ENCODE measurements at regions of chrX and their contacts with region 1.

Region 1: GRCh38 chrX:71181910-71182799 is 37.5 kb downstream of the NLGN3 start:
- DNase-seq: peak; percentile 54 to 89 (median 80)
- ATAC-seq: peak; percentile 94 to 95
- H3K4me3 Mint-ChIP-seq: peak overlapping the region; percentile 88 to 98 (median 94)
- H3K27ac Mint-ChIP-seq: peak overlapping the region; percentile 90 to 100 (median 99)
- H3K4me1 Mint-ChIP-seq: peaks cover 0 to 21% (median 14%) of the 10 kb centered on the region in 4 donors
- H3K27me3 Mint-ChIP-seq: no peaks in the 10 kb centered on the region

Region 2: GRCh38 chrX:71103110-71103983 is 78.8 kb before region 1 on chrX:
- POLR2A ChIA-PET with region 1: interaction called, 14 read pairs
- DNase-seq: peak; percentile 28 to 78 (median 50)
- ATAC-seq: peak; percentile 41 to 58
- H3K4me3 Mint-ChIP-seq: peak overlapping the region; percentile 73 to 88 (median 80)
- H3K27ac Mint-ChIP-seq: peak overlapping the region; percentile 90 to 97 (median 94)
- H3K4me1 Mint-ChIP-seq: peaks cover 39 to 90% (median 89%) of the 10 kb centered on the region in 4 donors
- H3K27me3 Mint-ChIP-seq: no peaks in the 10 kb centered on the region

Region 3: DNA sequence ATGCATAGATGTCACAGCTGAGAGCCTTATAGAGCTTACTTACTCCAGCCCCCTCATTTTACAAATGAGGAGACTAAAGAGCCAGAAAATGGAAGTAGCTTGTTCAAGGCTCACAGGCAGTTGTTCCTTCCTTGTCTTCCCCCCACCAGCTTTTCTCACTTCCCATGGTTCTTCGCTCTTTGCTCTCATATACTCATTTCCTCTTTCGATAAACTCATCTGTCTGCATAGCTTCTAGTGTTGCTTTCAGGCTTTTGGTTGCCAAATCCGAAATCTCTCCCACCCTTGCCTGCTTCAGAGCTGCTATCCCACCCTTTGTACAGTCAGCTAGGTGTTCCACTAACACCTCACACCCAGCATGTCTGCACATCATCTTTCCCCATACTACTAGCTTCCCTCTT is 15.9 kb after region 1 on chrX:
- POLR2A ChIA-PET with region 1: interaction called, 37 read pairs
- DNase-seq: peak in 3 of 10 donors; percentile 17 to 29 (median 22)
- ATAC-seq: peak; percentile 49 to 56
- H3K4me3 Mint-ChIP-seq: peak overlapping the region; percentile 78 to 94 (median 90)
- H3K27ac Mint-ChIP-seq: peak overlapping the region; percentile 86 to 98 (median 94)
- H3K4me1 Mint-ChIP-seq: peaks cover 15 to 35% (median 30%) of the 10 kb centered on the region in 4 donors
- H3K27me3 Mint-ChIP-seq: no peaks in the 10 kb centered on the region

Region 4: DNA sequence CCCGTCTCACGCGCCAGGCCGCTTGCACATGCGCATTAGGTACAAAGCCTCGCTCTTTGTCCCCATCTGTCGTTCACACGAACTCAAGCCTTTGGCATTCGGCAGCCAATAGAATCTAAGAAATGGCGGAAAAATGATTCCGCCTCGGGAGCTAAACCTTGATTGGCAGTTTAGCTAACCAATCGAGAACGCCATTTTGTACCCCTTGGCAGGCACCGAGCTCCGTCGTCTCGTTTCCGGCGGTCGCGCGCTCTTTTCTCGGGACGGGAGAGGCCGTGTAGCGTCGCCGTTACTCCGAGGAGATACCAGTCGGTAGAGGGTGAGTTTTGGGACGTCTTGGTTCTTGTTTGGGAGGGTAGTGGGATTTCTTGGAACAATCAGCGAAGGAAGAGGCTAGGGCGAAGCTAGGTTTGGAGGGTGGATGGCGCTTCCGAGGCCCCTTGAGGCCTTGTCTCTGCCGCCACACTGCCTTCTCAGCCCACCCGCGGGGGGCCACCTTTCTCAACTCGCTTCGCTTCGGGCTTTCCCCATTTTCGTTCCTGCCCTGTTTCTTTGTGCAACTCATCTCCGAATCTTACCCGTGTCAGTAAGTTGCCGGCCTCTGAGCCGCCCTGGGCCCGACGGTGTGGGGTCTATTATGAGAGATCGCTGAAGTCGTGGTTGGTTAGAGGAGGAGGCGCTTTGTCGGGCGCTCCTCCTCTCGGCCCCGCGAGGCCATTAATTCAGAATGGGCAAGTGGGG is 101.4 kb after region 1 on chrX and contains the start of gene NONO:
- POLR2A ChIA-PET with region 1: interaction called, 29 read pairs
- DNase-seq: peak; percentile 61 to 96 (median 86)
- ATAC-seq: peak; percentile 88 to 90
- H3K4me3 Mint-ChIP-seq: peak within 1 kb of the TSS; percentile 96 to 100 (median 99)
- H3K27ac Mint-ChIP-seq: peak within 1 kb of the TSS; percentile 99 to 100 (median 100)
- H3K4me1 Mint-ChIP-seq: peaks cover 1 to 32% (median 12%) of the 10 kb centered on the region in 4 donors
- H3K27me3 Mint-ChIP-seq: no peaks in the 10 kb centered on the region
- polyA plus RNA-seq, gene NONO: 177 to 199 (median 193) TPM

Region 5: GRCh38 chrX:71301195-71301924 is 119.2 kb after region 1 on chrX and contains the start of gene ITGB1BP2:
- POLR2A ChIA-PET with region 1: no interaction called
- DNase-seq: no peak
- ATAC-seq: peak in 1 of 2 donors; percentile 26
- H3K4me3 Mint-ChIP-seq: no peak within 1 kb of the TSS
- H3K27ac Mint-ChIP-seq: peak within 1 kb of the TSS in 5 of 10 donors; percentile 22 to 72 (median 49)
- H3K4me1 Mint-ChIP-seq: peaks cover 3 to 8% (median 6%) of the 10 kb centered on the region in 4 donors
- H3K27me3 Mint-ChIP-seq: no peaks in the 10 kb centered on the region
- polyA plus RNA-seq, gene ITGB1BP2: not detected

Region 6: GRCh38 chrX:71532753-71533425 is 350.7 kb after region 1 on chrX and contains the start of gene OGT:
- POLR2A ChIA-PET with region 1: interaction called, 10 read pairs
- DNase-seq: peak; percentile 76 to 98 (median 91)
- ATAC-seq: peak; percentile 78 to 81
- H3K4me3 Mint-ChIP-seq: peak within 1 kb of the TSS; percentile 94 to 99 (median 97)
- H3K27ac Mint-ChIP-seq: peak within 1 kb of the TSS; percentile 95 to 99 (median 98)
- H3K4me1 Mint-ChIP-seq: peaks cover 6 to 40% (median 28%) of the 10 kb centered on the region in 4 donors
- H3K27me3 Mint-ChIP-seq: no peaks in the 10 kb centered on the region
- polyA plus RNA-seq, gene OGT: 29.7 to 32.7 (median 31.3) TPM

Measured in naive thymus-derived CD8-positive, alpha-beta T cell (primary cell).